ENCODE measurements at regions of chr4 and their contacts with region 1.

Region 1: GRCh38 chr4:47933840-47934239 is 19.5 kb upstream of the NFXL1 start:
- DNase-seq: no peak
- H3K4me3 Mint-ChIP-seq: no peak overlapping the region
- H3K27ac Mint-ChIP-seq: no peak overlapping the region
- H3K4me1 Mint-ChIP-seq: no peaks in the 10 kb centered on the region
- H3K27me3 Mint-ChIP-seq: no peaks in the 10 kb centered on the region

Region 2: DNA sequence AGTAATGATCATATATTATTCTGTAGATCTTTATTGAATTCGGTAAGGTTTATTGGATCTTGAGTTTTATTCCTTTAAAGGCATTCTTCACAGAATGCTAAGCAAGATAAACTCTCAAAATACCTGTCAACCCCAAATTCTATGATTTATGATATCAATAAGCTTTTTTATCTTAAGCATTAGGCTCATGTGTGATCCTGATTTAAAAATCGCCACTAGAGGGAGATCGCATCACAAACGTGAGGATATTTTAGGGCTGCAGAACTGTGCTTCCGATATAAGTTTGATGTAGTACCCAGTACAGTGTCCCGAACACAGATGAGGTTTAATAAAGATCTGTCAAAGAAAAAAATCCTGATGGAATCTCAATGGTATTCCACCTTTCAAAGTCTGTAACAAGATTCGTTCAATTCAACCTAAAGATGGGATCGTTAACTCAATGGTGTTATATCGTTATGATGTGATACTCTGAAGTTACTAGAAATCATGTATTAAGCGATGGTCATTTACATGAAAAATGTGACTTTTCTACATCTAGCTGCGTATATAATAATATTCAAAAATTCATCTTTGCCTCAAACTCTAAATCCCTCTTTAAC is 264.9 kb before region 1 on chr4:
- CTCF ChIA-PET with region 1: interaction called, 17 read pairs
- POLR2A ChIA-PET with region 1: no interaction called
- intact Hi-C with region 1: loop called (anchors 5 kb)
- DNase-seq: no peak
- H3K4me3 Mint-ChIP-seq: no peak overlapping the region
- H3K27ac Mint-ChIP-seq: no peak overlapping the region
- H3K4me1 Mint-ChIP-seq: no peaks in the 10 kb centered on the region
- H3K27me3 Mint-ChIP-seq: peaks cover 4% of the 10 kb centered on the region

Region 3: DNA sequence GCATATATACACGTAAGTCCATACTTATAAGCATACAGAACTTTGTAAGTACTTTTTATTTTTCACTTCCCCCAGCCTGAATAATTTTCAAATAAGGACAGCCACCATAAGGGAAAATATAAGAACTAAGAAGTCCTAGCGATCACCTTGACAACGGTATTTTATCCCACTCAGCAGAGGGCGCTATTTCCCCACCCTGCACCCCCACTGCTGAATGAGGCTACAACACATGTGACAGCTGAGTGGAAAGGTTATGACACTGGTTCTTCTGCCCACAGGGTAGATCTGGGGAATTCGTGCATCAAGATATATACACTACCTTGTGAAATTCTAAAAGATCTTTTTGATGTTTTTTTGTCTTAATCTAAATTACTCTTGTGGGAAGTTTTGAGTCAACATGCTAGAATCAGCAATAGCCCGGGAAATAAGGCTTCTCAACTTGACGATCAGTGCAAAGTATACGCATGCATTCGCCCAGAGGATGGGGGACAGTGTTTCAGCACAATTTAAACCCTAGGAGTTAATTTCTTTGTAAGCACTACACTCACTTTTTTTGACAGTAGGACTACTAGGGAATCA is 247.5 kb before region 1 on chr4:
- CTCF ChIA-PET with region 1: interaction called, 47 read pairs
- POLR2A ChIA-PET with region 1: no interaction called
- intact Hi-C with region 1: loop called (anchors 1 kb)
- DNase-seq: peak; percentile 81
- H3K4me3 Mint-ChIP-seq: no peak overlapping the region
- H3K27ac Mint-ChIP-seq: no peak overlapping the region
- H3K4me1 Mint-ChIP-seq: peaks cover 2% of the 10 kb centered on the region
- H3K27me3 Mint-ChIP-seq: peaks cover 8% of the 10 kb centered on the region

Region 4: DNA sequence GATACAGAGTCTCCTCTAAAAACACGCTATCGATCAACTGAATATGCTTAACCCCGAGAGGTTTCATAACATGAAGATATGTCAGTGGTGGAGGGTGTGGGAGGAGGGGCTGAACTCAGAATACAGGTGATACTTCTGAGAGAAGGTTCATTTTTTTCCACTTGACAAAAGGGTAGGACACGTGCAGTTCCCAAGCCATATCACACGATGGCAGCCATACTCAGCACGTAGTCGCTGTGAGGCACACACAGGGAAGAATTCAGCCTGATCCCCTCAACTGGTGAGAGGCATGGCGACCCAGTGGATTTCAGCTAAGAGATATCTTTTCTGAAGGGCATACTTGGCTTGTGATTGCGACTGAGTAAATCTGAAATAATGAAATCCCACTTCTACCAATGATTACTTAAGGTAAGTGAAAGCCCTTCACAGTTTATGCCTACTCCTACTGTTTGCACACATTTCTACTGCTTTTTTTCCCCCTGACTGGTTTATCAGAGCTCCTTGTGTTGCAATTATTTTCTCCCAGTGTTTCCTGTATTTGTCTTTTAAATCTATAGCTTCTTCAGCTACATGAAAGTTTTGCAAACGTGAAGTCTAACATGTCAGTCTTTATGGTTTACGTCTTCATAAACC is 229.0 kb before region 1 on chr4:
- CTCF ChIA-PET with region 1: interaction called, 6 read pairs
- POLR2A ChIA-PET with region 1: no interaction called
- intact Hi-C with region 1: loop called (anchors 1 kb)
- DNase-seq: peak; percentile 37
- H3K4me3 Mint-ChIP-seq: no peak overlapping the region
- H3K27ac Mint-ChIP-seq: no peak overlapping the region
- H3K4me1 Mint-ChIP-seq: no peaks in the 10 kb centered on the region
- H3K27me3 Mint-ChIP-seq: peaks cover 20% of the 10 kb centered on the region